ENCODE measurements at regions of chr11 and their contacts with region 1.

Region 1: GRCh38 chr11:94705896-94706615 is 62.1 kb upstream of the AMOTL1 start:
- DNase-seq: peak; percentile 83
- H3K4me3 Mint-ChIP-seq: peak overlapping the region; percentile 81
- H3K27ac Mint-ChIP-seq: peak overlapping the region; percentile 95
- H3K4me1 Mint-ChIP-seq: peaks cover 18% of the 10 kb centered on the region
- H3K27me3 Mint-ChIP-seq: no peaks in the 10 kb centered on the region
- CTCF ChIP-seq: no peak

Region 2: DNA sequence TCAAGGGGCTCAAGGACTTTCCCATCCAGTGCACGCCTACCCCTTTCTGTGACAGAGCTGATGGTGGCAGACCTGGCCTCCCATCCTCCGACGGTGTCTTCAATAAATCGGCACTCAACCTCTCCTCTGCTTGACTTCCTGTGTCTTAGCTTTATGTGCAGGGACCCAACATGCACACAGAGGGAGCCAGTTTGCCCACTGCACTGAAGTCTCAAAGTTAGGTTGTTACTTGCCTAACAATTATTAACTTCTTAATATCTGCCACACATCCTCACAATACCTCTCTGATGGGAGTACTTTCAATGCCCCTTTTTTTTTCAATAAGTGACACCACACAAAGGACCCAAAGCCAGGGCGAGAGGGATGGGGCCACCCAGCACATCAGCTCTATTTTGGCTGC is 398.0 kb before region 1 on chr11:
- CTCF ChIA-PET with region 1: no interaction called
- POLR2A ChIA-PET with region 1: no interaction called
- intact Hi-C with region 1: no loop called
- DNase-seq: no peak
- H3K4me3 Mint-ChIP-seq: no peak overlapping the region
- H3K27ac Mint-ChIP-seq: no peak overlapping the region
- H3K4me1 Mint-ChIP-seq: peaks cover 9% of the 10 kb centered on the region
- H3K27me3 Mint-ChIP-seq: peaks cover 25% of the 10 kb centered on the region
- CTCF ChIP-seq: no peak

Region 3: DNA sequence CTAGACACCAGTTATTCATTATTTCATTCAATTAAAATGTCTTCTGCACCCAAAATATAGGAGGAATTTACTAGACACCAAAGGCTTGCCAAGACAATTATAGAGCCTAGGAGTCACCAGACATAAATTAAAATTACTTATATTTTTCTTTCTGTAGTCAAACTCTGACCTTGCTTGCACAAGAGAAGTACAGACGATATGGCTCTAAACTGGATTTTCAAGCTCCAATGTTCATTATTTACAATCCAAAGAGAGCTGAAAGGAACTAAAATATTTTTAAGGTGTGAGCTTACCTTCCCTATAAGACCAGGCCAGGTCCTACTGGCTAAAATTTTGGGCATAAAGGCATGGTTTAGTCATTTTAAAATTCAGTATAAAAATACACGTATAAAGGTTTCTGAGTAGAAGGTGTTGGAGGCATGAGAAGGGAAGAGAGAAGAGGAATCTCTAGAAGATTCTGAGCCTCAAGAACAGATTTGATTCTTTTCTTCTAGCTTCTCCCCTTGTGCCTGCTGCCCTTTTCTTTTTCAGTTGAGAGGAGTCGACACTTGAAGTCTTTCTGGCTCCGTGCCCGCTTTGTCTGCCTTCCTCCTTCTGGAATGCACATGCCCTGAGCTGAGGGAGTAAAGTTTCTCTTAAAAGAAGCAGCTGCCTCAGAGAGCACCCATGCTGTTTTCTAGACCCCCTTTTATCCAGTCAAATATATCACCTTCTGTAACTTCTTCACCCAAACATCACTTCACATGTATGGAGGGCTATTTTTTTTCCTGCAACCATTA is 180.3 kb before region 1 on chr11:
- CTCF ChIA-PET with region 1: no interaction called
- POLR2A ChIA-PET with region 1: no interaction called
- intact Hi-C with region 1: no loop called
- DNase-seq: peak; percentile 58
- H3K4me3 Mint-ChIP-seq: no peak overlapping the region
- H3K27ac Mint-ChIP-seq: no peak overlapping the region
- H3K4me1 Mint-ChIP-seq: peaks cover 9% of the 10 kb centered on the region
- H3K27me3 Mint-ChIP-seq: no peaks in the 10 kb centered on the region
- CTCF ChIP-seq: no peak

Region 4: DNA sequence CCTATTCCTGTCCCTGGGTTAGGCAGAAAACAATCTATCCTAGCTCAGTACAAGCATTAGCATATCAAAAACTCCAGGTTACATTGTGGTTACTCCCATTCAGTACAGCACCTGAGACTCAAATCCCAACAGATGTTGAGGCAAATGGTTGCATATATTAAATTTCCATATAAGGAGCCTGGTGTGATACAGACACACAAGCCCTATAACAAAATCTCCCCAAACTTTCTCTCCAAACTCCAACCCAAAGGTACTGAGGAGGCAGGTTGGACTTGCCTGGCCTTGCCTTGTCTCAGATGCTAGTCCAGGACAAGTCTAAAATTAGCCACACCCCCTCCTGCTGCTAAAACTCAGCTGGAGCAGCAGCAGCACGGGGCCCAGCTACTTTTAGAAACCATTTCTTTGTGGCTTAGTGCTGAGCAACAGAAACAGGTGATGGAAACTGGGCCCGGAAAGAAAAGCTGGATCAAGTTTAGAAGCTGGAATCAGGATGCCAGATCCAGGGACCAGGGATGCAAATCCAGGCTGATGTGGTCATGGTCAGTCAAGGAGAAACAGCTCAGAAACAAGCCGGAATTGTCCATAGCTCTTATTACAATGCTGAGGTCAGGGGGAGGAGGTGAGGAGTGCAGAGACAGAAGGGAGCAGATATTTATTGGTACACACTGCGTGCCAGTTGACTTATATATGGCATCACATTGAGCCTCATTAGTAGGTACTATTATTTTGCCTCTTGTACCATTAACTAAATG is 11.6 kb before region 1 on chr11:
- CTCF ChIA-PET with region 1: interaction called, 11 read pairs
- POLR2A ChIA-PET with region 1: interaction called, 40 read pairs
- intact Hi-C with region 1: no loop called
- DNase-seq: no peak
- H3K4me3 Mint-ChIP-seq: no peak overlapping the region
- H3K27ac Mint-ChIP-seq: peak overlapping the region; percentile 59
- H3K4me1 Mint-ChIP-seq: peaks cover 14% of the 10 kb centered on the region
- H3K27me3 Mint-ChIP-seq: no peaks in the 10 kb centered on the region
- CTCF ChIP-seq: no peak

Region 5: GRCh38 chr11:94731880-94732601 is 26.0 kb after region 1 on chr11:
- CTCF ChIA-PET with region 1: interaction called, 10 read pairs
- POLR2A ChIA-PET with region 1: interaction called, 39 read pairs
- intact Hi-C with region 1: loop called (anchors 2 kb)
- DNase-seq: peak; percentile 95
- H3K4me3 Mint-ChIP-seq: no peak overlapping the region
- H3K27ac Mint-ChIP-seq: peak overlapping the region; percentile 77
- H3K4me1 Mint-ChIP-seq: peaks cover 34% of the 10 kb centered on the region
- H3K27me3 Mint-ChIP-seq: no peaks in the 10 kb centered on the region
- CTCF ChIP-seq: no peak

Region 6: DNA sequence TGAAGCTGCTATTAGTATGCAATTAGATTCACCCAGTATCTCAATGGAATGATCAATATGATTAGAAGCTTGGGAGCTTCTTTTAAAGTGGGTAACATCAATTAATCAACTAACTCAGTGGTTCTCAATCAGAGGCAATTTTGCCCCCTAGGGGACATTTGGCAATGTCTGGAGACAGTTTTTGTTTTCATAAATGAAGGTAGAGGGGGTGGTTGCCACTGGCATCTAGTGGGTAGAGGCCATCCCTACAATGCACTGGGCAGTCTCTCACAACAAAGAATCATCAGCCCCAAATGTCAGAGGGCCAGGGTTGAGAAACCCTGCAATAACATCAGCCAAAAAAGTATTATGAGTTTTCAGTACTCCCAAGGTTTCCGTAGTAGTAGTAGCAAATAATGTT is 56.2 kb after region 1 on chr11:
- CTCF ChIA-PET with region 1: no interaction called
- POLR2A ChIA-PET with region 1: interaction called, 62 read pairs
- intact Hi-C with region 1: loop called (anchors 2 kb)
- DNase-seq: peak; percentile 71
- H3K4me3 Mint-ChIP-seq: no peak overlapping the region
- H3K27ac Mint-ChIP-seq: no peak overlapping the region
- H3K4me1 Mint-ChIP-seq: no peaks in the 10 kb centered on the region
- H3K27me3 Mint-ChIP-seq: no peaks in the 10 kb centered on the region
- CTCF ChIP-seq: peak; percentile 58

Region 7: DNA sequence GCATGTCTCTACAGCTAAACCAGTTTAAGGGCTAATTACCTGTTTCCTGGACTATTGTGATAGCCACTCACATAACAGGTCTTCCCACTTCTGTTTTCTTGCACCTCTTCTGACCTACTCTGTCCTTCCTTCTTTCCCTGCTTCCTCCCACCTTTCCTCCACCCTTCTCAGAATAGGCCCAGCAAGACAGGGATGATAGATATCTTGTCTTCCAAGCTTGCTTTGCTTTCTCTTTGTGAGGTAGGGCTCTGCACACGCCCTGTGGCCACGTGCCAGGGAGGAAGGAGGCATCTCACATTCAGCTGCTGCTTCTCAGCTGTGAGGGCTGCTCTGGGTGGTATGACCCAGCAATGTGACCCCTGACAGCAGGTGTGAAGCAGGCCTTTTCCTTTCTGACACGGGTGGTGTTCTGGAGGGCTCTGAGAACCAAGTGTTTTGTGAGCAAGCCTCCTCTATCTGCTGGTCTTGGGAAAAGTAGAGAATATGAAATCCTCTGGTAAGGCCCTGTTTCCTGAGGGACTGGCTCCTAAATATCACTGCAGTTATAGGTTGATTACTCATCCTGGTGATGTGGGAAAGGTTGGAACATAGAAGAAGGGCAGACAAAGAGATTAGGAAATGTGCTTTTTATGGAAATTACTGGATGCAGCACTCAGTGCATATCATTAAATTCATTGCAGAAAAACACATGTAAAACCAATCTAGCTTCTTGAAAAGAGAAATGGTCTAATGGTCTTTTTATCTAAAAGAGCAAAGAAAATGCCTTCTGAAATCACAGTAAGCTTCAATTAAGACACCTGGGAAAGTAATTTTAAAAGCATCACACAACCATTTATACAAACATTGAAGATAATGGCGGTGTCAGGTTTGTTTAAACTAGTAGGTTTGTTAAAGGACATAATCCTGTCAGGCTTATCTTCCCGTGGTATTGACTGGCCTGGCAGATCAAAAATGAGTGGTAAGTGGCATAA is 70.6 kb after region 1 on chr11:
- CTCF ChIA-PET with region 1: interaction called, 3 read pairs
- POLR2A ChIA-PET with region 1: interaction called, 18 read pairs
- intact Hi-C with region 1: no loop called
- DNase-seq: peak; percentile 67
- H3K4me3 Mint-ChIP-seq: no peak overlapping the region
- H3K27ac Mint-ChIP-seq: peak overlapping the region; percentile 78
- H3K4me1 Mint-ChIP-seq: peaks cover 35% of the 10 kb centered on the region
- H3K27me3 Mint-ChIP-seq: no peaks in the 10 kb centered on the region
- CTCF ChIP-seq: no peak

Region 8: DNA sequence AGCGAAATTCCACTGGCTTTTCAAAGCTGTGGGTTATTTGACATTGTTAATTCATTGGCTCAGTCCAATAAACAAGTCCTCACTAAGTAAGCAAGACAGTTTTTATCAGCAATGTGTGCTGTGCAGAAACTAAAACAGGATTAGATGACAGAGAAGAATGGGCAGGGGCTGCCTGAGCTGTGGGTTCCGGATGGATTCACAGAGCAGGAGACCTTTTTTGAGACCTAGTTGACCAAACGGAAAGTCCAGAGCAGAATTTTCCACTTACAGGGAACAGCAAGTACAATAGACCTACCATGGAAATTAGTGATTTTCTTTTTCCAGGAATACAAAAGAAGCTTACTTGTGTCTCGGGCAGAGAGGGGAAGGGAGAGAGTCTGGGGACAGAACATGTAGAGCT is 338.0 kb after region 1 on chr11:
- CTCF ChIA-PET with region 1: no interaction called
- POLR2A ChIA-PET with region 1: no interaction called
- intact Hi-C with region 1: no loop called
- DNase-seq: no peak
- H3K4me3 Mint-ChIP-seq: no peak overlapping the region
- H3K27ac Mint-ChIP-seq: no peak overlapping the region
- H3K4me1 Mint-ChIP-seq: no peaks in the 10 kb centered on the region
- H3K27me3 Mint-ChIP-seq: peaks cover 47% of the 10 kb centered on the region
- CTCF ChIP-seq: no peak

Region 9: GRCh38 chr11:95279921-95280868 is 574.1 kb after region 1 on chr11:
- CTCF ChIA-PET with region 1: no interaction called
- POLR2A ChIA-PET with region 1: no interaction called
- intact Hi-C with region 1: no loop called
- DNase-seq: no peak
- H3K4me3 Mint-ChIP-seq: no peak overlapping the region
- H3K27ac Mint-ChIP-seq: peak overlapping the region; percentile 46
- H3K4me1 Mint-ChIP-seq: peaks cover 31% of the 10 kb centered on the region
- H3K27me3 Mint-ChIP-seq: no peaks in the 10 kb centered on the region
- CTCF ChIP-seq: no peak

Measured in MCF 10A (cell line).